Posterior vena cava (tissue), 2 donors: ENCODE measurements at regions of chr4 and their contacts with region 1.

Region 1: GRCh38 chr4:148192526-148192925 is 249.7 kb downstream of the NR3C2 start:
- DNase-seq: no peak

Region 2: DNA sequence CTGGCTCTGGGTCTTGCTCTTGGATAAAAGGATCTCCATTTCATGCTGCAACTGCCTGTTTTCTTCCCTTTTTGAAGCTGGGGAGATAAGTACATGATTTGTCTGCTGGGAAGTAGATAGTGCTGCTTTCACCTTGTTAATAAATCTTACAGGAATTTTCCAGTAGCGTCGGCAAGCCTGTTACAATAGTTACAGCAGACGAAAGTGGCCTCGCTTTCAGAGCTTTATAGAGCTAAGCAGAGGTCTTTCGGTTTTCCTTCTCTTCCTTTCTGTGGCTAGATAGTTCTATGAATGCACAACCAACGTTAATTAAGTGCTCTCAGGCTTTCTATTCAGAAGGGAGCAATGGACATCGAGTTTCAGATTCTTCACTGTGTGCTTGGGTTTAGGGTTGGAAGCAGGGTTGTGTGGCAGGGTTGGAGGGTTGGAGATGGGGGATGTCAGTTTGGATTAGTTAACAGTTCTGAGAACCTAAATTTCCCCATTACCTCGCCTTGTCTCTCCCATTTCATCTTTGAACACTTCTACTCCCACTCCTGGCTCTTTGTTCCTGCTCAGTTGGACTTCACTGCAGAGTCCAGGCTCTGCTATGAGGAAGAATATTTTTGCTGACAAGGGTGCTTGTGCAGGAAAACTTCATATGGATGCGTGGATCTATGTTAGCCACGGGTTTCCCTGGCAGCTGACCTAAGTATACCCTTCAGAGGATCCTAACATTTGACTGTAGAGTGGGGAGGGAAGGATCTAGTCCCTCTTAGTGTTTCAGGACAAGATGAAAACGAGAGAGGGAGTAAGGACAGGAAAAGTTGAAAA is 222.7 kb before region 1 on chr4:
- intact Hi-C with region 1: loop called in 1 of 2 experiments (anchors 5 kb)
- DNase-seq: no peak